Heart left ventricle (tissue), 16 donors: ENCODE measurements at regions of chr4 and their contacts with region 1.

Region 1: GRCh38 chr4:112823606-112824005 is 186.7 kb downstream of the LARP7 start:
- DNase-seq: no peak
- ATAC-seq: no peak
- H3K4me3 ChIP-seq: no peak overlapping the region
- H3K27ac ChIP-seq: no peak overlapping the region
- H3K4me1 ChIP-seq: peaks cover 0 to 9% (median 0%) of the 10 kb centered on the region in 12 donors
- H3K27me3 ChIP-seq: no peaks in the 10 kb centered on the region
- CTCF ChIP-seq: no peak
- POLR2A ChIP-seq: no peak

Region 2: DNA sequence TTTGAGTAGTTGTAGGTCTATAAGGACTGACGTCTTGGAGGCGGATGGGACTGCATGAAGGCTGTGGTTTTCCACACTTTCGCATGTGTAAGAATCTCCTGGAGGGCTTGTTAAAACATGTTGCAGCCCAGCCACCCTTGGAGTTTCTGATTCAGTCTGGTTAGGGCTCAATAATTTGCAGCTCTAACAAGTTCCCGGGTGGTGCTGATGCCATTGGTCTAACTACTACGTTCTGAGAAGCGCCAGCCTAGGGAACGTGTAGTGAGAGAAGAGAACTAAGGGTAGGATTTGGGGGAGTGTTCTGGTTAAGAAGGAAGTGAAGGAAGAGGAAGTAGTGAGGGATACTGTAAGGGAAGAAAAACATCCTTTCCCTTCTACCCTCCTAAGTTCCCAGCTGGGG is 47.8 kb before region 1 on chr4:
- intact Hi-C with region 1: loop called in 1 of 10 experiments (anchors 10 kb)
- DNase-seq: no peak
- ATAC-seq: no peak
- H3K4me3 ChIP-seq: no peak overlapping the region
- H3K27ac ChIP-seq: no peak overlapping the region
- H3K4me1 ChIP-seq: peaks cover 0 to 4% (median 0%) of the 10 kb centered on the region in 12 donors
- H3K27me3 ChIP-seq: no peaks in the 10 kb centered on the region
- CTCF ChIP-seq: no peak
- POLR2A ChIP-seq: no peak

Region 3: GRCh38 chr4:112793033-112793432 is 30.6 kb before region 1 on chr4:
- intact Hi-C with region 1: loop called in 1 of 10 experiments (anchors 5 kb)
- DNase-seq: no peak
- ATAC-seq: no peak
- H3K4me3 ChIP-seq: no peak overlapping the region
- H3K27ac ChIP-seq: no peak overlapping the region
- H3K4me1 ChIP-seq: no peaks in the 10 kb centered on the region
- H3K27me3 ChIP-seq: no peaks in the 10 kb centered on the region
- CTCF ChIP-seq: no peak
- POLR2A ChIP-seq: no peak